A673 (cell line): ENCODE measurements at regions of chr17 and their contacts with region 1.

Region 1: DNA sequence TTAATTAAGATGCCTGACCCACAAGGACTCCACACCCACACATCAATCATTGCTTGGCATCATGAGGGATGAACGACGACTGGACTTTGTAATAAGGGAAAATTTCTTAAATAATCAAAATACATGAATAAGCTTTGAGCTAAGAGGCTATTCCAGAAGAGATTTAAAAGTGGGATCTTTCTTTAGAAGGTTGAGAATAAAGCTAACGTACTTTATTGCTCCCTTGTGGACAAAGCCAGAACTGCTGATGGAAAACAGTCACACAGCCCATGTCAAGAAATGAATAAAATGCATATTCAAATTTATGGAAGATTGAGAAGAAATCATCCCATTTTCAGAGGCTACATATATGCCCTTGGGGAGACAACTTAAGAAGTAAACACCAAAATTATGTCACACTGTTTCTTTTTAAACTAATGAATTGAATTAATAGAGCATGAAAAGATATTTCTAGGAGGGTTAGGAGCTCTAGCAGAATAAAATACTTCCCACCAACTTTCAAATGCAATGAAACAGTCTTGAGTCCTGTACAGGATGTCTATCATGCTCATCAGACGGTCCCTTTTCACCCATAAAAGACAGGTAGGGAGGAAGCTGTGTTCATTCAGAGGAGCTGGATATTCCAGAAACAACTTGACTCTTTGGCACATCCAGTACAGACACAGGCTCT is 60.2 kb upstream of the PHOSPHO1 start:
- DNase-seq: peak; percentile 76
- H3K4me3 ChIP-seq: no peak overlapping the region
- H3K27ac ChIP-seq: peak overlapping the region; percentile 44
- H3K4me1 ChIP-seq: peaks cover 11% of the 10 kb centered on the region
- H3K27me3 ChIP-seq: no peaks in the 10 kb centered on the region
- CTCF ChIP-seq: peak; percentile 88

Region 2: GRCh38 chr17:49061524-49061943 is 229.3 kb before region 1 on chr17:
- CTCF ChIA-PET with region 1: interaction called, 10 read pairs
- POLR2A ChIA-PET with region 1: no interaction called
- intact Hi-C with region 1: loop called (anchors 10 kb)
- DNase-seq: peak; percentile 41
- H3K4me3 ChIP-seq: no peak overlapping the region
- H3K27ac ChIP-seq: no peak overlapping the region
- H3K4me1 ChIP-seq: no peaks in the 10 kb centered on the region
- H3K27me3 ChIP-seq: no peaks in the 10 kb centered on the region
- CTCF ChIP-seq: no peak

Region 3: GRCh38 chr17:49315551-49316257 is 24.9 kb after region 1 on chr17:
- CTCF ChIA-PET with region 1: no interaction called
- POLR2A ChIA-PET with region 1: no interaction called
- intact Hi-C with region 1: no loop called
- DNase-seq: peak; percentile 89
- H3K4me3 ChIP-seq: peak overlapping the region; percentile 3
- H3K27ac ChIP-seq: no peak overlapping the region
- H3K4me1 ChIP-seq: peaks cover 57% of the 10 kb centered on the region
- H3K27me3 ChIP-seq: no peaks in the 10 kb centered on the region
- CTCF ChIP-seq: peak; percentile 85

Region 4: DNA sequence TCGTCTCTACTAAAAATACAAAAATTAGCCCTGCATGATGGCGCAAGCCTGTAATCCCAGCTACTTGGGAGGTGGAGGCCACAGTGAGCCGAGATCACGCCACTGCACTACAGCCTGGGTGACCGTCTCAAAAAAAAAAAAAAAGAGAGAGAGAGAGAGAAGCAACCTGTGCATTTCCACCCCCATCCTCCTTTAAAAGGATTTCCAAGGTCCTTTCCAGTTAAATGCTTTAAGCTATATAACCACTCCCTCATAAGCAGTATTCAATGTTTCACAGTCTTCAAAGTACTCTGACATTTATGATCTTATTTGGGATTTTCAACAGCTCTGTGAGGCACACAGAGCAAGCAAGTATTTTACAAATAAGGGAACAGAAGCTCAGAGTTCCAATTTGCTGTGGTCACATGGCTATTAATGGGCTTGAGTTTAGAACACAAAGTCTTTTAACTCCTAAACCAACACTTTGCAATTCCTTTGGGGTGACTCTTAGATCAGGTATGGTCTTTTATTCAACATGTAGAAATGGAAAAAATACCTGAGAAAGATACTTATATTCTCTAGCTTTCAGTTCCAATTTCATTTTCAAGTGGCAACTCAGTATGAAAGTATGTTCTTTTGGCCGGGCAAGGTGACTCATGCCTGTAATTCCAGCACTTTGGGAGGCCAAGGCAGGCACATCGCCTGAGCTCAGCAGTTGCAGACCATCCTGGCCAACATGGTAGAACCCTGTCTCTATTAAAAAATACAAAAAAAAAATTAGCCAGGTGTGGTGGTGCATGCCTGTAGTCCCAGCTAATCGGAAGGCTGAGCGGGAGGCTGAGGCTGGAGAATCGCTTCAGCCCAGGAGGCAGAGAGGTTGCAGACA is 355.8 kb after region 1 on chr17:
- CTCF ChIA-PET with region 1: no interaction called
- POLR2A ChIA-PET with region 1: no interaction called
- intact Hi-C with region 1: no loop called
- DNase-seq: peak; percentile 4
- H3K4me3 ChIP-seq: no peak overlapping the region
- H3K27ac ChIP-seq: no peak overlapping the region
- H3K4me1 ChIP-seq: no peaks in the 10 kb centered on the region
- H3K27me3 ChIP-seq: no peaks in the 10 kb centered on the region
- CTCF ChIP-seq: no peak